Vagina (tissue), 2 donors: ENCODE measurements at regions of chr6 and their contacts with region 1.

Region 1: DNA sequence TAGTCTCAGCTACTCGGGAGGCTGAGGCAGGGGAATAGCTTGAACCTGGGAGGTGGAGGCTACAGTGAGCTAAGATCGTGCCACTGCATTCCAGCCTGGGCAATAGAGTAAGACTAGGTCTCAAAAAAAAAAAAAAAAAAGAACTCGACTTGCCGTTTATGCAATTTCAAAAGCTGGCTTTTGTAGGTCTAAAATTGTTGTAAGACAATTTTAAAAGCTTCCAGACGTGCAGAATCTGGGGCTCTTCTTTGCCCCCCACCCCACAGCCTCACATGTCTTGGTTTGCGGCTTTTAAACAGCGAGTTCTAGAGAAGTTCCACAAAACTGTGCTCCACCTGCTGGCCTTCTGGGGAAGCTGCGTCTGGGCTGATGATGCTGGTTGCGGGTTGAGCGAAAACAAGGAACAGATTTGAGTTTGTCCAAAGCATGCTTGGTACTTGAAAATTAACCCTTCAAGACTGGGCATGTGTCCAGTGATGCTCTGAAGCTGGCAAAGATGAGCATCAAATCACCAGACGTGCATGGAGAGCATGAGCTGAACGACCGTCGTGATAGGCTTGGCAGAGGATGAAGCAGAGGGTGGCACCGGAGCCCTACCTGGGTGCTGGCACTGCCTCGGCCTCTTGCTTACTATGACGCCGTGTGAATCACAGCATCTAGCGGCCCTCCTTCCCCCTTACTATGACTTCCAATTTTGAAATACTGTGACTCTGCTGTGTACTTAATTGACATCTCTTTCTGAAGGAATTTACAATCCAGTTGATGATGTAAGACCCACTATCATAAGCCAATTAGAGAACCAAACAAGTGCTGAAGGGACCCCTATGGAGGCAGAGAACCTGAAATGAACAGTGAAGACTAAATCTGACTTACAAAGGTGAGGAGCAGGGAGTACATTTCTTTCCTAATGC is 171.4 kb downstream of the GMPR start:
- DNase-seq: no peak
- H3K4me3 ChIP-seq: no peak overlapping the region
- H3K27ac ChIP-seq: peak overlapping the region; percentile 6
- H3K4me1 ChIP-seq: peaks cover 14% of the 10 kb centered on the region
- H3K27me3 ChIP-seq: no peaks in the 10 kb centered on the region
- CTCF ChIP-seq: peak; percentile 21 to 78 (median 64)
- POLR2A ChIP-seq: no peak

Region 2: GRCh38 chr6:16338577-16339262 is 71.1 kb before region 1 on chr6:
- intact Hi-C with region 1: loop called (anchors 5 kb)
- DNase-seq: no peak
- H3K4me3 ChIP-seq: no peak overlapping the region
- H3K27ac ChIP-seq: peak overlapping the region; percentile 65
- H3K4me1 ChIP-seq: peaks cover 58% of the 10 kb centered on the region
- H3K27me3 ChIP-seq: no peaks in the 10 kb centered on the region
- CTCF ChIP-seq: peak in 1 of 3 experiments; percentile 48
- POLR2A ChIP-seq: no peak

Region 3: DNA sequence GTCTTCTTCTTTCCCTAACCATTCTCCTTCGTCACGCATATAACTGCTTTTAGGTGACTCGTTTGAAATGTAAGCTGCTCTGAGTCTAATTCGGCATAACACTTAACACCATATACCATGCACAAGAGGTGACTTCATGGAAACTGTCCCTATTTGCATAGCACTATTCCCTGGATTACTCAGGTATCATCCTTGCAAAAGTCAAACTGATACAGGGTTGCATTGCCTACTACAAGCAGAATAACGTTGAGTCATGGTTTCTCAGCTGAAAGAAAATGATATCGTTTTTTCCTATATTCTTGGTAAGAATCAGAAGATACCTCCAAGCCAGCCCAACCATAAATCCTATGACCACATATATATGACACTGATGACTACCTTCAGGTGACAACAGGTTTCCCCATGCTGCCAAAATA is 123.9 kb after region 1 on chr6:
- intact Hi-C with region 1: no loop called
- DNase-seq: no peak
- H3K4me3 ChIP-seq: no peak overlapping the region
- H3K27ac ChIP-seq: no peak overlapping the region
- H3K4me1 ChIP-seq: no peaks in the 10 kb centered on the region
- H3K27me3 ChIP-seq: no peaks in the 10 kb centered on the region
- CTCF ChIP-seq: no peak
- POLR2A ChIP-seq: no peak

Region 4: GRCh38 chr6:16849280-16849987 is 439.6 kb after region 1 on chr6:
- intact Hi-C with region 1: no loop called
- DNase-seq: no peak
- H3K4me3 ChIP-seq: no peak overlapping the region
- H3K27ac ChIP-seq: no peak overlapping the region
- H3K4me1 ChIP-seq: peaks cover 19% of the 10 kb centered on the region
- H3K27me3 ChIP-seq: no peaks in the 10 kb centered on the region
- CTCF ChIP-seq: no peak
- POLR2A ChIP-seq: no peak